ENCODE measurements at regions of chr1 and their contacts with region 1.

Region 1: GRCh38 chr1:113978863-113979702 is at the start of gene OLFML3:
- DNase-seq: peak; percentile 85
- ATAC-seq: peak; percentile 79
- H3K4me3 Mint-ChIP-seq: peak within 1 kb of the TSS; percentile 64
- H3K27ac Mint-ChIP-seq: peak within 1 kb of the TSS; percentile 97
- H3K4me1 Mint-ChIP-seq: peaks cover 91% of the 10 kb centered on the region
- H3K27me3 Mint-ChIP-seq: no peaks in the 10 kb centered on the region
- CTCF ChIP-seq: peak; percentile 54
- total RNA-seq, gene OLFML3: 65.8 to 91.1 TPM (median 90.4 TPM) in 3 replicates

Region 2: DNA sequence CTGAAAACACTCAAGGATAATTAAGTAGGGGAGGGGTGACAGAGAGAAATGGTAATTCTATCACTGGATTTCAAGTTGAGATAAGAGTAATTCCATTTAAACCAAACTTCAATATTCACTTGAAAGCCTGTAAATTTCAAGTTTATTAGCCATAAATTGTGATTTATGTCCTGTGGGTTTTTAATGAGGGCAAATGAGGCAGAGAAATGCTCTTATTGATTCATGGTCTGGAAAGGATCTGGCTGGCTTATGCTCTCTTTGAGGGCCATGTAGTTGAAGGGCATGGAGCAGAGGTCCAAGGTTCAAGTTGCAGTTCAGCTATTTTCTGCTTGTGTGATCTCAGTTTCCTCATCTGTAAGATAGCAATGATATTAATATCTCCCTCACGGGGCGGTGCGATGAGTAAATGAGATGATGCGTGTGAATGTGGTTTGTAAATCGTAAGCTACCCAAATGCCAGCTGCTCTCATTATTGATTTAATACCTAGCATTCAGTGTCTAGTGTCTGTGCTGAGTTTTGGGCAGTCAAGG is 12.4 kb after region 1 on chr1:
- CTCF ChIA-PET with region 1: interaction called, 10 read pairs
- POLR2A ChIA-PET with region 1: no interaction called
- DNase-seq: no peak
- ATAC-seq: no peak
- H3K4me3 Mint-ChIP-seq: no peak overlapping the region
- H3K27ac Mint-ChIP-seq: no peak overlapping the region
- H3K4me1 Mint-ChIP-seq: 0 out of 2 replicates have a peak, but pooled peaks cover 4% of the 10 kb centered on the region
- H3K27me3 Mint-ChIP-seq: peaks cover 38% of the 10 kb centered on the region
- CTCF ChIP-seq: no peak

Region 3: DNA sequence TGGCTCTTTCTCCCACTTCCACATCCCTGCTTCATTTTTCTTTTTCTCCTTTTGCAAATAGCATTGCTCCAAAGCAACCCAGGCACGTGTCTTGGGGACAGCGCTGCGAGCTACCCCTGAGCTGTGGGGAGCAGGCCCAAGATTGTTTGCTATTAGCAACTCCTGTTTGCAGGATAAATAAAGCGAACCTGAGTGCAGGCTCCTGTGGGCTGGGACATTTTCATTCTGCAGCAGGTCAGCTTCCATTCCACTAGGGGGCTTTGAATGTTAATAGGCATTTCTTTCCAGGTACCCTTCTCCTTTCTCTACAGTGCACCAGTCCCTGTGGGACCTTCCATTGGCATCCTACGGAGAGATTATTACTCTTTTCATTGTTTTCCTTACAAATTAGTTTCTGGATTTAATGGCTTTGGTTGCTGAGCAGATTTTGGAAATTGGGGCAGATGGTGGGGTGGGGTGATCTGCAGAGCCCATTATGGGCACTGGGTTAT is 54.2 kb after region 1 on chr1:
- CTCF ChIA-PET with region 1: interaction called, 39 read pairs
- POLR2A ChIA-PET with region 1: interaction called, 7 read pairs
- DNase-seq: peak; percentile 56
- ATAC-seq: peak; percentile 69
- H3K4me3 Mint-ChIP-seq: no peak overlapping the region
- H3K27ac Mint-ChIP-seq: no peak overlapping the region
- H3K4me1 Mint-ChIP-seq: peaks cover 26% of the 10 kb centered on the region
- H3K27me3 Mint-ChIP-seq: no peaks in the 10 kb centered on the region
- CTCF ChIP-seq: peak; percentile 58; the same call in 1 of the 2 replicates

Region 4: GRCh38 chr1:114108751-114109255 is 129.7 kb after region 1 on chr1:
- CTCF ChIA-PET with region 1: interaction called, 15 read pairs
- POLR2A ChIA-PET with region 1: no interaction called
- DNase-seq: no peak
- ATAC-seq: no peak
- H3K4me3 Mint-ChIP-seq: no peak overlapping the region
- H3K27ac Mint-ChIP-seq: no peak overlapping the region
- H3K4me1 Mint-ChIP-seq: peaks cover 73% of the 10 kb centered on the region
- H3K27me3 Mint-ChIP-seq: no peaks in the 10 kb centered on the region
- CTCF ChIP-seq: no peak

Region 5: DNA sequence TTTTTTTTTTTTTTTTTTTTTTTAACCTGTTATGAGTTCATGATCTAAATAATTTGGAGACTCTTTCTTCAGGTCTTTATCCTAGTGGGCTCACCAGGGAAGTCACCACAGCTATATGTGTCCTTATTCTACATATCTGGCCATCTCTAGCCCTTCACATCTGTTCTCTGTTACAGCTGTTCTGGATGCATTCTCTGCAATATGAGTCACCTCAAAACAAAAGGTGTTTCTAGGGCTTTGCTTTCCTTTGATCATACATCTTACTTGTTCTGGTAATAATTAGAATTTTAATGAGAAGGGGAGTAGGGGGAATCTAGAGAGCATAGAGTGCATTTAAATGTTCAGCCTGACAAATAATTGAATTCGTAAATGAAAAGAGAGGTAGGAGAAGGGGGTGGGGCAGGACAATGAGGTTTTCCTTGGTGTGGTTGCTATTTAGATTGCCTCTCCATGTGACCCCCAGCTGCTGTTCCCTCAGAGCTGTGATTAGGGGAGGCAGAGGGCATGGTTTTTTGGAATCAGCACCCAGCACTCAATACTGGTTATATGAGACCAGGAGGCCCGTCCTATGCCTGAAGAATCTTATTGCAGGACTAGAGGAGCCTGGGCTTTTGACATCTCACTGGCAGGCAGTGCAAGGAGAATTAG is 166.5 kb after region 1 on chr1:
- CTCF ChIA-PET with region 1: interaction called, 51 read pairs
- POLR2A ChIA-PET with region 1: no interaction called
- DNase-seq: no peak
- ATAC-seq: peak; percentile 78
- H3K4me3 Mint-ChIP-seq: peak overlapping the region; percentile 33
- H3K27ac Mint-ChIP-seq: peak overlapping the region; percentile 73; the same call in 1 of the 2 replicates
- H3K4me1 Mint-ChIP-seq: peaks cover 77% of the 10 kb centered on the region
- H3K27me3 Mint-ChIP-seq: no peaks in the 10 kb centered on the region
- CTCF ChIP-seq: no peak

Region 6: DNA sequence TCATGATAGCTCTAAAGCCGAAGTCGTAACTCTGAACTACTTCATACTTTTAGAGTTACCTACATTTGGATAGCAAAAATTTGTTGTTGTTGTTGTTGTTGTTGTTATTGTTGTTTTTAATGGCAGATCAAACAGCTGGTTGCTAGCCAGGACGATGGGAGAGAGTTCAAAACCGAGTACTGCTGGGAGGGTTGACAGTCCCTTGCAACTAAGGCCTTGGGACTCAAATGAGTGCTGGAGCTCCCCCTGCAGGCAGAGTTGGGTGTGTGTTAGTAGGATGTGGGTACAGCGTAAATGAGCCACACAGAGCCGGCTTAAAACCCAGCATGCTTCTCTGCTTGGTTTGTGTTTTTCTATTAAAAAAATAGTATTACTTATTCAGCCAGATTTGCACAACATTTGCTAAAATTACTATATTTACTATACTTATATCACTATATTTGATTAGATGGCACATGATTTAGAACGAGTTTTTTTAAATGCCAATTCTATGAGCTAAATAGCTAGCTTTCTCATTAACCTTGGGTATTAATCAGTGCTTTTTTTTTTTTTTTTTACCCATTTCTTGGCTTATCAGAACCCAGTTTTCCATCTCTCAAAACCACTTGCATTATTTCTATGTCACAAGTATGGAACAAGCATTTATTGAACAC is 303.8 kb after region 1 on chr1:
- CTCF ChIA-PET with region 1: interaction called, 107 read pairs
- POLR2A ChIA-PET with region 1: no interaction called
- DNase-seq: peak; percentile 91
- ATAC-seq: peak; percentile 100
- H3K4me3 Mint-ChIP-seq: no peak overlapping the region
- H3K27ac Mint-ChIP-seq: no peak overlapping the region
- H3K4me1 Mint-ChIP-seq: peaks cover 14% of the 10 kb centered on the region
- H3K27me3 Mint-ChIP-seq: peaks cover 2% of the 10 kb centered on the region; the same call in 1 of the 2 replicates
- CTCF ChIP-seq: peak; percentile 75